ENCODE measurements at regions of chr11 and their contacts with region 1.

Region 1: DNA sequence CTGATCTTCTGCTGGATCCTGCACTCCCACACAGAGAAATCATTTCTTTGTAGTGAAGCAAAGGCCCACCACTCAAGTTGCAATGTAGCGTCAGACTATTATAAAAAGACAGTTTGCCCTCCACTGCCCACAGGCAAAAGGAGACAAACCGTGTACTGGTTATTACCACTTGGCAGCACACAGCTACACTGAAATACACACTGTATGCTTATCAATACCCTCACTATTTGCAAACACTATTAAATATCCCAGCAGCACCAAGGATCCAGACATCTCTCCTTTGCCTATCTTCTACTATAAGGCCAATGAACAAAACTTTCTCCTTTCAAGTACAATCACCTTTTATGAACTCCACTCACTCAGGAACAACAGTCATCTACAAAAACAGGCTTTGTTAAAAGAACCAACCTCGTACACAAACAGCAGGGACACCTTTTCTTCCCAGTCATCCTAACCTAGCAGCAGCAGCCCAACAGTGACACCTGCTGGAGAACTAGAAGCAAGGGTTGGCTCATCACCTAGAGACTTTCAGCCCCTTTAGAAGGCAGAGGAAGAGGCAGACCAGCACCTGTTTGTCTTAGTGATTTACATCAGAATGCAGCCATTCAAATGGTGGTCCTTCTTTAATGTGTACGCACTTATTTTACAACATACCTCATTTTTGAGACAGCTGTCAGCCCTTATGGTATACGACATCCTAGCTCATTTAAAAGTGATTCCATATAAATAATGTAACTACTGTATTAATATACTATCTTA is 56.1 kb downstream of the AMBRA1 start:
- DNase-seq: peak; percentile 66
- ATAC-seq: peak; percentile 57
- H3K4me3 ChIP-seq: no peak overlapping the region
- H3K4me3 Mint-ChIP-seq: no peak overlapping the region
- H3K27ac ChIP-seq: no peak overlapping the region
- H3K27ac Mint-ChIP-seq: no peak overlapping the region
- H3K4me1 ChIP-seq: no peaks in the 10 kb centered on the region
- H3K4me1 Mint-ChIP-seq: peaks cover 16% of the 10 kb centered on the region
- H3K27me3 ChIP-seq: no peaks in the 10 kb centered on the region
- H3K27me3 Mint-ChIP-seq: no peaks in the 10 kb centered on the region
- CTCF ChIP-seq: peak; percentile 83

Region 2: DNA sequence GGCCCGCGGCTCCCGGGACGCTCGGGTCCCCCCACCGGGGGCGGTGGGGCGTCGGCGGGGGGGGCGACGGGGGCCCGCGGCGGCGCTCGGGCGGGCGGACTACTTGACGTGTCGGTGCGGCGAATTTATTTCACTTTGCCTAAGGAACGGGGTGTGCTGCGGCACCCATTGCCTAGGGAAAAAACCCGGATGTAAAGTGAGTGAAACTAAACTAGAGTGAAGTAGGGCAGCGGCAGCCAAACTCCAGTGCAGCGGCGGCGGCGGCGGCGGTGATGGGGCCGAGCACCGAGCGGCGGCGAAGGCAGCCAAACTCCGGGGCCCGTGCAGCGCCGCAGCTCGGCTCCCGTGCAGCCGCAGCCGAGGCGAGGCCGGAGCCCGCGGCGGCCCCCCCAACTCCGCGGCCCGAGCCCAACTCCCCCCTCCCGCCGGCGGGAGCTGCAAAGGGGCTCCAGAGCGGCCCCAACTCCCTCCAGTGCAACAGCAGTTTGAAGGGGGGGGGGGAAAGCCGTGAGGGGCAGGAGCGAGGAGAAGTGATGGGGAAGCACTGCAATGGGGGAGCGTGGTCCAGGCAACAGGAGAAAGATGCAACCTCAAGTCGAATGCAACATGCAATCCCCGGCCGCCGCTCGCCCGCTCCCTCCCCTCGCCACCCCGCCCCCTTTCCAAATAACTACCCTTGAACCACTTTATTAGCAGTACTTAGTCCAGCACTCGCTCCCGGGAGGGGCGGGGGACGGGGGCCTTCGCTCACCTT is 415.8 kb before region 1 on chr11:
- CTCF ChIA-PET with region 1: no interaction called
- POLR2A ChIA-PET with region 1: no interaction called
- intact Hi-C with region 1: no loop called
- DNase-seq: peak; percentile 91
- ATAC-seq: peak; percentile 47
- H3K4me3 ChIP-seq: peak overlapping the region; percentile 38 to 89 (median 78)
- H3K4me3 Mint-ChIP-seq: peak overlapping the region; percentile 93
- H3K27ac ChIP-seq: peak overlapping the region in 1 of 2 donors; percentile 61
- H3K27ac Mint-ChIP-seq: peak overlapping the region; percentile 97
- H3K4me1 ChIP-seq: peaks cover 21 to 22% of the 10 kb centered on the region in 2 donors
- H3K4me1 Mint-ChIP-seq: peaks cover 29% of the 10 kb centered on the region
- H3K27me3 ChIP-seq: no peaks in the 10 kb centered on the region
- H3K27me3 Mint-ChIP-seq: no peaks in the 10 kb centered on the region
- CTCF ChIP-seq: no peak

Region 3: GRCh38 chr11:46238967-46239800 is 298.5 kb before region 1 on chr11:
- CTCF ChIA-PET with region 1: interaction called, 3 read pairs
- POLR2A ChIA-PET with region 1: no interaction called
- intact Hi-C with region 1: loop called (anchors 2 kb)
- DNase-seq: peak; percentile 86
- ATAC-seq: peak; percentile 81
- H3K4me3 ChIP-seq: peak overlapping the region in 2 of 5 experiments; percentile 25
- H3K4me3 Mint-ChIP-seq: peak overlapping the region; percentile 75
- H3K27ac ChIP-seq: no peak overlapping the region
- H3K27ac Mint-ChIP-seq: no peak overlapping the region
- H3K4me1 ChIP-seq: peaks cover 30 to 31% of the 10 kb centered on the region in 2 donors
- H3K4me1 Mint-ChIP-seq: peaks cover 35% of the 10 kb centered on the region
- H3K27me3 ChIP-seq: peaks cover 0 to 48% (median 26%) of the 10 kb centered on the region in 4 experiments
- H3K27me3 Mint-ChIP-seq: peaks cover 56% of the 10 kb centered on the region
- CTCF ChIP-seq: peak; percentile 98

Region 4: DNA sequence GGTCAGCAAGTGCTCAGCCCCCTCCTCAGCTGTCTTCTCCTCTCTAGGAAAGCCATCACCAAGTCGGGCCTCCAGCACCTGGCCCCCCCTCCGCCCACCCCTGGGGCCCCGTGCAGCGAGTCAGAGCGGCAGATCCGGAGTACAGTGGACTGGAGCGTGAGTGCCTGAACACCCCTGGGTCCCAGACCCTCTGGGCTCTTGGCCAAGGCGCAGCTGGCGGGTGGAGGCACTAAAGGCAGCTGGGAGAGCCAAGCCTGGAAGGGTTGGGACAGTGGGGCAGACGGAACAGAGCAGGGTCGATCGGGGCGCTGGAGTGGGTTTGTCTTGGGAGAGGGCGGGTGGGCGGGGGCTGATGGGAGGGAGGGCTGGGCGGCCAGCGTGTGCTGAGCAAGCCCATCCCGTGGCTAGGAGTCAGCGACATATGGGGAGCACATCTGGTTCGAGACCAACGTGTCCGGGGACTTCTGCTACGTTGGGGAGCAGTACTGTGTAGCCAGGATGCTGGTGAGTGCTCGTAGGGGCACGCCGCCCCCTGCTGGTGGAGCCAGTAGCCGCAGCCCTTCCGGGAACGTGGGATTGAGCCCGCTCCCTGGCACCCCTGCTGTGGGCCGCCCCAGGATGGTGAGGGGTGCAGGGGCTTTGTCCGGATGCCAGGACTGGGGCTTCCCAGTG is 170.3 kb before region 1 on chr11:
- CTCF ChIA-PET with region 1: no interaction called
- POLR2A ChIA-PET with region 1: no interaction called
- intact Hi-C with region 1: loop called (anchors 1 kb)
- DNase-seq: peak; percentile 74
- ATAC-seq: peak; percentile 75
- H3K4me3 ChIP-seq: no peak overlapping the region
- H3K4me3 Mint-ChIP-seq: no peak overlapping the region
- H3K27ac ChIP-seq: no peak overlapping the region
- H3K27ac Mint-ChIP-seq: no peak overlapping the region
- H3K4me1 ChIP-seq: peaks cover 2 to 13% of the 10 kb centered on the region in 2 donors
- H3K4me1 Mint-ChIP-seq: peaks cover 13% of the 10 kb centered on the region
- H3K27me3 ChIP-seq: no peaks in the 10 kb centered on the region
- H3K27me3 Mint-ChIP-seq: no peaks in the 10 kb centered on the region
- CTCF ChIP-seq: peak; percentile 87

Region 5: DNA sequence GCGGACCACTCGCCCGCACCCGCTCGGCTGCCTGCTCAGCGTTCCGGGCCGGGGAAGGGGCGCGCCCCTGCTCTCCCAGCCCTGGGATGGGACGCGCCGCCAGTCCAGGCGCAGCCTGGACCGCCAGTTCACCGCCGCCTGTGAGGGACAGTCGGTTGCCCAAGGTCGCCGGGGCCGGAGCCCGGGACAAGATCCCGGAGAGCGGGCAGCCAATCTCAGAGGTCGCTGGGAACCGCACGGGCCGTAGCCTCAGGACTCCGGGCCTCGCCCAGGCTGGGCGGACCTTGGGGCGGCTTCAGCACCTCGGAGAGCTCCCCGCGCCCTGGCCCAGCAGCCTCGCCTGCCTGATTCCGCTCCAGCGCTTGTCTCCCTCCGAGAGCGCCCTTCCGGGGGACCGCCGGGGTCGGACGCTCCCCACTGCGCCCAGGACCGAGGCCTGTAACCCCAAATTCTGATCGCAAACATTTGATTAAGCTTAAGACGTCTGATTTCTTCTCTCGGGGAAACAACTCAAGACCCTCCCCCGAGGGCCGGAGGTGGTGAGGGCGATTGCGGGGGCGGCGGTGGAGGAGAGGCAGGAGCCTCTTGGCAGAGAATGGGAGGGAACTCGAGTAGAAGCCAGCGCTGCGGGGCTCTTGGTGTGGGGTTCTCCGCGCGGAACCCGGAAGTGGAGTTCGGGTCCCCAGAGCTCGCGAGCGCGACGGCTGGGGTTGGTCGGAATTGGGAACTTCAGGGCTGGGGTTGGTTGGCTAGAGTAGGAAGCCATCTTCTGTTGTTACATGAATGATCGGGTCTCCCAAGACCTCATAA is 145.1 kb before region 1 on chr11:
- CTCF ChIA-PET with region 1: interaction called, 10 read pairs
- POLR2A ChIA-PET with region 1: no interaction called
- intact Hi-C with region 1: loop called (anchors 2 kb)
- DNase-seq: peak; percentile 85
- ATAC-seq: peak; percentile 94
- H3K4me3 ChIP-seq: peak overlapping the region in 1 of 5 experiments; percentile 16
- H3K4me3 Mint-ChIP-seq: peak overlapping the region; percentile 76
- H3K27ac ChIP-seq: no peak overlapping the region
- H3K27ac Mint-ChIP-seq: no peak overlapping the region
- H3K4me1 ChIP-seq: peaks cover 28 to 43% of the 10 kb centered on the region in 2 donors
- H3K4me1 Mint-ChIP-seq: peaks cover 19% of the 10 kb centered on the region
- H3K27me3 ChIP-seq: peaks cover 0 to 48% (median 29%) of the 10 kb centered on the region in 4 experiments
- H3K27me3 Mint-ChIP-seq: peaks cover 29% of the 10 kb centered on the region
- CTCF ChIP-seq: no peak

Region 6: GRCh38 chr11:46472670-46472994 is 65.1 kb before region 1 on chr11:
- CTCF ChIA-PET with region 1: no interaction called
- POLR2A ChIA-PET with region 1: no interaction called
- intact Hi-C with region 1: no loop called
- DNase-seq: no peak
- ATAC-seq: no peak
- H3K4me3 ChIP-seq: no peak overlapping the region
- H3K4me3 Mint-ChIP-seq: no peak overlapping the region
- H3K27ac ChIP-seq: no peak overlapping the region
- H3K27ac Mint-ChIP-seq: no peak overlapping the region
- H3K4me1 ChIP-seq: no peaks in the 10 kb centered on the region
- H3K4me1 Mint-ChIP-seq: peaks cover 4% of the 10 kb centered on the region
- H3K27me3 ChIP-seq: no peaks in the 10 kb centered on the region
- H3K27me3 Mint-ChIP-seq: no peaks in the 10 kb centered on the region
- CTCF ChIP-seq: no peak

Region 7: GRCh38 chr11:46489661-46490560 is 47.8 kb before region 1 on chr11:
- CTCF ChIA-PET with region 1: interaction called, 4 read pairs
- POLR2A ChIA-PET with region 1: no interaction called
- intact Hi-C with region 1: loop called (anchors 2 kb)
- DNase-seq: peak; percentile 43
- ATAC-seq: peak; percentile 63
- H3K4me3 ChIP-seq: no peak overlapping the region
- H3K4me3 Mint-ChIP-seq: no peak overlapping the region
- H3K27ac ChIP-seq: no peak overlapping the region
- H3K27ac Mint-ChIP-seq: peak overlapping the region; percentile 5
- H3K4me1 ChIP-seq: peaks cover 0 to 3% of the 10 kb centered on the region in 2 donors
- H3K4me1 Mint-ChIP-seq: peaks cover 19% of the 10 kb centered on the region
- H3K27me3 ChIP-seq: no peaks in the 10 kb centered on the region
- H3K27me3 Mint-ChIP-seq: no peaks in the 10 kb centered on the region
- CTCF ChIP-seq: peak; percentile 54

Region 8: DNA sequence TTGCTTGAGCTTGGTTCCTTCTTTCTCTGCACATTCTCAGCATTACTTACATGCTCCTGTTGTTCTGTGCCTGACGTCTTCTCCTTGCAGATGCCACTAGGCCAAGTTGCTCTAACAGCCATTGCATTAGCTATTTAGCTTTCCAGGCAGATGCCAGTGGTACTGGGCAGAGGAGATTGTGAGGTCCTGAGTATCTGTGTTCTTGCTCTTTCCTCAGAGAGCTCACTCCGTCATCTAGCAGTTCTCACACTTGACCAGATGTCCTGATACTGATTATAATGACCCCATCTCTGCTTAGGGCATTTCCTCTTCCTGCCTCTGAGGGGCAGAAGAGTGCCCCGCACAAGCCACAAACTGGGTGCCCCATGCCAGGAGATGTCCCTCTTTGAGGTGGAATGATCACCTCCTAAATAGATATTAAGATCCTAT is 132.0 kb after region 1 on chr11:
- CTCF ChIA-PET with region 1: no interaction called
- POLR2A ChIA-PET with region 1: no interaction called
- intact Hi-C with region 1: no loop called
- DNase-seq: no peak
- ATAC-seq: no peak
- H3K4me3 ChIP-seq: no peak overlapping the region
- H3K4me3 Mint-ChIP-seq: no peak overlapping the region
- H3K27ac ChIP-seq: no peak overlapping the region
- H3K27ac Mint-ChIP-seq: no peak overlapping the region
- H3K4me1 ChIP-seq: peaks cover 6 to 8% of the 10 kb centered on the region in 2 donors
- H3K4me1 Mint-ChIP-seq: peaks cover 8% of the 10 kb centered on the region
- H3K27me3 ChIP-seq: no peaks in the 10 kb centered on the region
- H3K27me3 Mint-ChIP-seq: no peaks in the 10 kb centered on the region
- CTCF ChIP-seq: no peak

Measured in B cell (primary cell).